Heart left ventricle (tissue), 16 donors: ENCODE measurements at regions of chr12 and their contacts with region 1.

Region 1: DNA sequence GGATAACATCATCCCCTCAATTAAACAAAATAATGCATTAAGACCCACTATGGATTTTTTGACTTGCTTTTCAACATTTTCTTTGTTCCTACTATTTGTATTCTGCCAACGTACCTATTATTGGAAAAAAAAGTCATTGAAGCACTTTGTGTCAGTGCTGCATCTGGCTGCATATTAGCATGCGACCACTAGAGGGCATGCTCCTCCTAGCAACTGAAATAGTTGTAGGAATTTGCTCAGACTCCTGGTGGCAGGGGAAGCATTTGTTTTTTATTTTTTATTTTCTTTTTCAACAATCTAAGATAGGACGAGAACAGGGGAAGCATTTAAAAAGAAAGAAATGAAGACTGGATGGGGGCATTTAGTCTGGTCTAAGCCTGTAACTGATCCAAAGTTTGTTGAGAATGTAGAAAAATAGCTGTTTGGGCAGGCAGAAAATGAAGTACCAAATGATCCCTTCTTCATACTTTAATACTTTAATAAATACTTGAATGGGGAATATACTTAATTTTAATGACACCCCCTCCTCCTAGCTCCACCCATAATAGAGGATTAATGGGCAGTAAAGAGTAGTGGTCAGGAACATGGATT is 14.5 kb upstream of the CLEC4A start:
- DNase-seq: peak; percentile 52 to 75 (median 69)
- ATAC-seq: peak in 3 of 4 donors; percentile 63 to 69 (median 65)
- H3K4me3 ChIP-seq: no peak overlapping the region
- H3K27ac ChIP-seq: no peak overlapping the region
- H3K4me1 ChIP-seq: peaks cover 0 to 4% (median 0%) of the 10 kb centered on the region in 12 donors
- H3K27me3 ChIP-seq: no peaks in the 10 kb centered on the region
- CTCF ChIP-seq: peak; percentile 93 to 99 (median 97)
- POLR2A ChIP-seq: no peak

Region 2: DNA sequence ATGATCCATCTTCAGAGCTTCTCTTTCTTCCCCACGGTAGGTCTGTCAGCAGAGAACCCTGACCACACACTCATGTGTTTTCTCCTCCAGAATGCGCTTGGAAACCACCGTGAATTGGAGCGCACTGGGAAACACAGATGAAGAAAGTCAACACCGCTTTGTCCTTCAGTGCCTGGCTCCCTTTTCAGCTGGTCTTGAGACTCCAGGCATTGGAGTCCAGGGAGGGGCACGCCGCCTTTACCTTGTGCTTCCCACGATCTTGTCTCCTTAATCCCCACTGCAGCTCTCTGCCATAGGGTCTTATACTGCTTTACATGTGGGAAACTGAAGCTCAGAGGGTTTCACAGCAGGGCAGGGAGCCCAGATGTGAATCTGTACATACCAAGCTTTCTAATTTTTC is 117.5 kb after region 1 on chr12:
- intact Hi-C with region 1: loop called in 4 of 10 experiments (anchors 5 to 10 kb)
- DNase-seq: no peak
- ATAC-seq: no peak
- H3K4me3 ChIP-seq: no peak overlapping the region
- H3K27ac ChIP-seq: no peak overlapping the region
- H3K4me1 ChIP-seq: peaks cover 0 to 12% (median 0%) of the 10 kb centered on the region in 12 donors
- H3K27me3 ChIP-seq: peaks cover 0 to 14% (median 0%) of the 10 kb centered on the region in 9 donors
- CTCF ChIP-seq: no peak
- POLR2A ChIP-seq: no peak